ENCODE measurements at regions of chr14 and their contacts with region 1.

Region 1: GRCh38 chr14:46581036-46581671 is 70.4 kb downstream of the RPL10L start:
- DNase-seq: peak; percentile 63
- H3K4me3 ChIP-seq: no peak overlapping the region
- H3K27ac ChIP-seq: no peak overlapping the region
- H3K4me1 ChIP-seq: peaks cover 10% of the 10 kb centered on the region
- H3K27me3 ChIP-seq: no peaks in the 10 kb centered on the region
- CTCF ChIP-seq: peak; percentile 60 to 63
- POLR2A ChIP-seq: no peak

Region 2: GRCh38 chr14:45716572-45716971 is 864.6 kb before region 1 on chr14:
- CTCF ChIA-PET with region 1: no interaction called
- POLR2A ChIA-PET with region 1: no interaction called
- dilution Hi-C with region 1: no loop called
- intact Hi-C with region 1: no loop called
- DNase-seq: no peak
- H3K4me3 ChIP-seq: no peak overlapping the region
- H3K27ac ChIP-seq: no peak overlapping the region
- H3K4me1 ChIP-seq: no peaks in the 10 kb centered on the region
- H3K27me3 ChIP-seq: no peaks in the 10 kb centered on the region
- CTCF ChIP-seq: no peak
- POLR2A ChIP-seq: no peak

Region 3: DNA sequence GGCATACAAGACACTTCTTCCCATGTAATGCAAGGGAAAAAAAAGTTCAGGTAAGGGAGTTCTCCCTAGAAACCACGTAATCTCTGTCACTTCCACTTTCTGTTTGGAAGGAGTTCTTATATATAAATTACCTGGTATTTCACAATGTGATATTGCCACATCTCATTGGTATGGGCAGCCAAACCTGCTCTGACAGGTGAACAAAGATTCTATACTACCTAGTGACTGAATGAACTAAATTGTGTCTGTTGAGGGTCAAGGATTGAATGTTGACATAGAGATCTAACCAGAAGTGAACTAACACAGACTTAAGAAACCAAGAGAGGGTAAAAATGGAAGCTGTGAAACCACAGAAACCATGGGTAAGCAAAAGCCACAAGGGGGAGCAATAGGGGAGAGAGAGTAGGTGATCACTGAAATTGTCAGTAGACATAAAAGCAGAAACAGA is 90.9 kb before region 1 on chr14:
- CTCF ChIA-PET with region 1: interaction called, 13 read pairs
- POLR2A ChIA-PET with region 1: no interaction called
- dilution Hi-C with region 1: no loop called
- intact Hi-C with region 1: loop called (anchors 1 kb)
- DNase-seq: peak; percentile 55
- H3K4me3 ChIP-seq: no peak overlapping the region
- H3K27ac ChIP-seq: no peak overlapping the region
- H3K4me1 ChIP-seq: no peaks in the 10 kb centered on the region
- H3K27me3 ChIP-seq: no peaks in the 10 kb centered on the region
- CTCF ChIP-seq: peak; percentile 29 to 49
- POLR2A ChIP-seq: no peak

Region 4: GRCh38 chr14:46596236-46596635 is 15.1 kb after region 1 on chr14:
- CTCF ChIA-PET with region 1: interaction called, 20 read pairs
- POLR2A ChIA-PET with region 1: no interaction called
- dilution Hi-C with region 1: no loop called
- intact Hi-C with region 1: no loop called
- DNase-seq: peak; percentile 81
- H3K4me3 ChIP-seq: no peak overlapping the region
- H3K27ac ChIP-seq: no peak overlapping the region
- H3K4me1 ChIP-seq: no peaks in the 10 kb centered on the region
- H3K27me3 ChIP-seq: no peaks in the 10 kb centered on the region
- CTCF ChIP-seq: no peak
- POLR2A ChIP-seq: no peak

Region 5: DNA sequence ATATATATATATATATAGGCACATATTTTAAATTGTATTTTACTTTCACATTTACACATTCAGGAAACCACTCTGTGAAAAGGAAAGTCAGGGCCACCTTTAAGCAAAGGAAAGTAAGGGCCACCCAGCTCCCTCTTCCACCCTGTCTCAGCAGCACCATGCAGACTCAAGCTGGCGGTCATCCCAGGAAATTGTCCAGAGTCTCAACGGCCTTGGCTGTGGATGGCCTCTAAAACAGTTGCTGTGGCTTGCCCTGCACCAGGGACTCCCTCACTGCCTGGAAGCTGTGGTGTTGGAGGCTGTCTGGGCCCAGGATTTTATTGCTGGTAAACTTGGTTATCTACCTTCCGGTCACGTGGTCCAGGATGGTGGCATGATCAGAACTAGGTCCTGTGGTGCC is 82.2 kb after region 1 on chr14:
- CTCF ChIA-PET with region 1: no interaction called
- POLR2A ChIA-PET with region 1: no interaction called
- dilution Hi-C with region 1: no loop called
- intact Hi-C with region 1: no loop called
- DNase-seq: no peak
- H3K4me3 ChIP-seq: no peak overlapping the region
- H3K27ac ChIP-seq: no peak overlapping the region
- H3K4me1 ChIP-seq: no peaks in the 10 kb centered on the region
- H3K27me3 ChIP-seq: no peaks in the 10 kb centered on the region
- CTCF ChIP-seq: no peak
- POLR2A ChIP-seq: no peak

Region 6: DNA sequence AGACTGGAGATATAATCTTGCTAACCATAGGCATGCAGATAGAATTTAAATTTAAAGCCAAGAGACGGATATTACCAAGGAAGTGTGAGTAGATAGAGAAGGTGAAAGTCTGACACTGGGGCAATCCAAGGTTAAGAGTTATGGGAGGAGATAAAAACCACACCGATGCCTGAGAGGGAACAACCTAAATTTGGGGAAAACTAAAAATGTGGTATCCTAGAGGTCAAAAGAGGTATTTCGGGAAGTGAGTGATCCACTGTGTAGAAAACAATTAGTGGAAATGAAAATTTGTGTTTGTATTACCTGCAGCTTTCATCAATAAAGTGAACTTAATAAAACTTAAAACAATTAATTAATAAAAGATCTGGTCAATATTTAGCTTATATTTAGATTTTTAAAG is 339.4 kb after region 1 on chr14:
- CTCF ChIA-PET with region 1: no interaction called
- POLR2A ChIA-PET with region 1: no interaction called
- dilution Hi-C with region 1: no loop called
- intact Hi-C with region 1: loop called (anchors 5 kb)
- DNase-seq: no peak
- H3K4me3 ChIP-seq: no peak overlapping the region
- H3K27ac ChIP-seq: no peak overlapping the region
- H3K4me1 ChIP-seq: no peaks in the 10 kb centered on the region
- H3K27me3 ChIP-seq: peaks cover 5 to 12% of the 10 kb centered on the region in 2 experiments
- CTCF ChIP-seq: no peak
- POLR2A ChIP-seq: no peak

Region 7: DNA sequence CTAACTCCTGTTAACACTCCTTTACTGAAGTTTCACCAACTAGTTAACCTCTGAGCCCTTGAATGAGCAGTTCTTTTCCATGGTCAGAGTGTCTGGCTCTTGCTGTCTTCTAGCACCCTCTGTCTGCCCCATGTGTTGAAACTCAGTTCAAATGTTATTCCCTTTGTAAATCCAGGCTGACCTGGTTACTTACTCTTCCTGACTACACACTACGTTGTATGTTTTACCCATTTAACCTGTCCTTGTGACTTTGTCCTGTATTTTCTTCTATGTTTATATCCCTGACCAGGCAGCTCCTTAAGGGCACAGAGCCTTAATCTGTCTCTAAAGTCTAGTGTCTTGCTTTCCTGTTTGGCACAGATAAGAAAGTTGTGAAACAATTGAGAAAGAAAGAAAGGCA is 459.4 kb after region 1 on chr14:
- CTCF ChIA-PET with region 1: no interaction called
- POLR2A ChIA-PET with region 1: no interaction called
- dilution Hi-C with region 1: no loop called
- intact Hi-C with region 1: loop called (anchors 5 kb)
- DNase-seq: peak; percentile 51
- H3K4me3 ChIP-seq: no peak overlapping the region
- H3K27ac ChIP-seq: no peak overlapping the region
- H3K4me1 ChIP-seq: no peaks in the 10 kb centered on the region
- H3K27me3 ChIP-seq: no peaks in the 10 kb centered on the region
- CTCF ChIP-seq: peak; percentile 5 to 13
- POLR2A ChIP-seq: no peak

Region 8: DNA sequence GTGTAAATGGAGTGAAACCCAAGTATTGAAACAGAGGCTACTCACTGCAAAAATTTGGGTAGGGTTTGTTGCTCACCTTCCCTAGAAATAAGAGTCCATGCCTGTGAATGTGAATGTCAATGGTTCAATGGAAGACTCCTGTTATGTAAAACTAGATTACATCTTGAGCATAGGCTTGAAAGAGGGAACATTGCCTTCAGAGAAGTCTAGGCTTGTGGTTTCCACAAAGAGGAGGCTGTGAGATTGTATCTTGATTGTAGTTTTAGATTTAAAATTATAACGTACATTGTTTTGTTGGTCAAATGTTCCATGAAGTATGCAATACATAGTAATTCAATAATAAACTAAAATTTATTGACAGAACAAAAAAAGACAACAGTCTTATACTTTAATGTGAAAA is 484.2 kb after region 1 on chr14:
- CTCF ChIA-PET with region 1: no interaction called
- POLR2A ChIA-PET with region 1: no interaction called
- dilution Hi-C with region 1: no loop called
- intact Hi-C with region 1: no loop called
- DNase-seq: no peak
- H3K4me3 ChIP-seq: no peak overlapping the region
- H3K27ac ChIP-seq: no peak overlapping the region
- H3K4me1 ChIP-seq: no peaks in the 10 kb centered on the region
- H3K27me3 ChIP-seq: no peaks in the 10 kb centered on the region
- CTCF ChIP-seq: no peak
- POLR2A ChIP-seq: no peak

Region 9: DNA sequence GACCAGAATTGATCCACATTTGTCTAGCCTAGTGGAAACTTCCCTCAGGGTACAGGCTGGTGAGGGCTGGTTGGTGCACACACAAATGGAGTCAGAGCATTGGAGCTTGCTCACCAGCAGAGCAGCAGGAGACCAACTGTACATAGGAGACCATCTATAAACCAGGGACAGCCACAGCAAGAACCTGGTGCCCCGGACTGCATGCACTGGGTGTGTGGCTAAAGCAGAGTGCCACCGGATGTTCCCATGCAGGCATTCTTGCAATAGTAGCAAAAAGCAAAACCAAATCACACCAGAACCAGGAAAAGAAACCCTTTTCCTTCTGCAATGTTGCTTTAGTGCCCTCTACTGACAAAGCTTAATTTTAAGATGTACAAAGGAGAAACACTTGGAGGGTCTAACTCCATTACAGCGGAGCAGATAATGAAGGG is 957.9 kb after region 1 on chr14:
- CTCF ChIA-PET with region 1: no interaction called
- POLR2A ChIA-PET with region 1: no interaction called
- dilution Hi-C with region 1: no loop called
- intact Hi-C with region 1: loop called (anchors 5 kb)
- DNase-seq: peak; percentile 13
- H3K4me3 ChIP-seq: no peak overlapping the region
- H3K27ac ChIP-seq: no peak overlapping the region
- H3K4me1 ChIP-seq: no peaks in the 10 kb centered on the region
- H3K27me3 ChIP-seq: no peaks in the 10 kb centered on the region
- CTCF ChIP-seq: peak in 1 of 2 donors; percentile 15
- POLR2A ChIP-seq: no peak

Measured in endothelial cell of umbilical vein (primary cell).